ENCODE measurements at regions of chr5 and their contacts with region 1.

Region 1: DNA sequence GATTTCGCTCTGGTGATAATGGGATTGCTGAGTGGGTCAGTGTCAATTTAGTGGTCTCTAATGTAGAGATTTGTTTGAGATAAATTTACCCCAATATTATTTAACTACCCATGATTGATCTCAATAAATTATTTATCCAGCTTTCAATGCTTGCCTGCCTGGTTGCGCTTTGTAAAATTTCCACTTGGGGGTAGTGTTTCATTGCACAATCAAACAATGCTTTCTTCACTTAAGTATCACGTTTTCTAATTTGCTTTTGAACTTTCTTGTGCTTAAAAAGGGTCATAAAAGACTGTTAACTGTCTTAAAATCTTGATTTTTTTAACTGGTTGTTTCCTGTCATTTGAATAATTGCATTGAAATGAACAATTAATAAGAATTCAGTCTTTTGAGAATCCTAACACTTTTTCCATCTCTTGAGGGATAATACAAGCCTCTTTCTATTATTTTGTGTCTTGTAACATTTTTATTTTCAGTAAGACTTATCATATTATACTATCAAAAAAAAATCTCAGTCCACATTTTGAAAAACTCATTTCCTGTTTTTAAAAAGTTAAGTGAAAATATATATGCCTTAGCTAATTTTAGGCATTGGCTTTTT is 18.7 kb downstream of the HSD17B4 start:
- DNase-seq: peak; percentile 40
- H3K4me3 ChIP-seq: no peak overlapping the region
- H3K27ac ChIP-seq: no peak overlapping the region
- H3K4me1 ChIP-seq: no peaks in the 10 kb centered on the region
- CTCF ChIP-seq: peak; percentile 90

Region 2: GRCh38 chr5:118520771-118521415 is 950.1 kb before region 1 on chr5:
- CTCF ChIA-PET with region 1: no interaction called
- POLR2A ChIA-PET with region 1: no interaction called
- intact Hi-C with region 1: no loop called
- DNase-seq: no peak
- H3K4me3 ChIP-seq: no peak overlapping the region
- H3K27ac ChIP-seq: no peak overlapping the region
- H3K4me1 ChIP-seq: no peaks in the 10 kb centered on the region
- CTCF ChIP-seq: no peak

Region 3: GRCh38 chr5:119597728-119598298 is 126.9 kb after region 1 on chr5:
- CTCF ChIA-PET with region 1: no interaction called
- POLR2A ChIA-PET with region 1: interaction called, 10 read pairs
- intact Hi-C with region 1: no loop called
- DNase-seq: no peak
- H3K4me3 ChIP-seq: no peak overlapping the region
- H3K27ac ChIP-seq: no peak overlapping the region
- H3K4me1 ChIP-seq: no peaks in the 10 kb centered on the region
- CTCF ChIP-seq: no peak

Region 4: GRCh38 chr5:120516805-120517204 is 1045.9 kb after region 1 on chr5:
- CTCF ChIA-PET with region 1: no interaction called
- POLR2A ChIA-PET with region 1: no interaction called
- intact Hi-C with region 1: no loop called
- DNase-seq: no peak
- H3K4me3 ChIP-seq: no peak overlapping the region
- H3K27ac ChIP-seq: no peak overlapping the region
- H3K4me1 ChIP-seq: no peaks in the 10 kb centered on the region
- CTCF ChIP-seq: no peak

Measured in OCI-LY7 (cell line).